ENCODE measurements at regions of chr15 and their contacts with region 1.

Region 1: GRCh38 chr15:62847900-62848489 is 194.6 kb upstream of the TPM1 start:
- DNase-seq: peak; percentile 67 to 76 (median 70)
- ATAC-seq: peak; percentile 93
- H3K4me3 ChIP-seq: no peak overlapping the region
- H3K27ac ChIP-seq: no peak overlapping the region
- H3K4me1 ChIP-seq: no peaks in the 10 kb centered on the region
- H3K27me3 ChIP-seq: peaks cover 18 to 51% of the 10 kb centered on the region in 2 experiments; a peak in 4 of 5 replicates
- CTCF ChIP-seq: peak; percentile 67 to 86 (median 76)
- EP300 ChIP-seq: no peak
- POLR2A ChIP-seq: no peak
- RAD21 ChIP-seq: peak; percentile 55 to 74

Region 2: DNA sequence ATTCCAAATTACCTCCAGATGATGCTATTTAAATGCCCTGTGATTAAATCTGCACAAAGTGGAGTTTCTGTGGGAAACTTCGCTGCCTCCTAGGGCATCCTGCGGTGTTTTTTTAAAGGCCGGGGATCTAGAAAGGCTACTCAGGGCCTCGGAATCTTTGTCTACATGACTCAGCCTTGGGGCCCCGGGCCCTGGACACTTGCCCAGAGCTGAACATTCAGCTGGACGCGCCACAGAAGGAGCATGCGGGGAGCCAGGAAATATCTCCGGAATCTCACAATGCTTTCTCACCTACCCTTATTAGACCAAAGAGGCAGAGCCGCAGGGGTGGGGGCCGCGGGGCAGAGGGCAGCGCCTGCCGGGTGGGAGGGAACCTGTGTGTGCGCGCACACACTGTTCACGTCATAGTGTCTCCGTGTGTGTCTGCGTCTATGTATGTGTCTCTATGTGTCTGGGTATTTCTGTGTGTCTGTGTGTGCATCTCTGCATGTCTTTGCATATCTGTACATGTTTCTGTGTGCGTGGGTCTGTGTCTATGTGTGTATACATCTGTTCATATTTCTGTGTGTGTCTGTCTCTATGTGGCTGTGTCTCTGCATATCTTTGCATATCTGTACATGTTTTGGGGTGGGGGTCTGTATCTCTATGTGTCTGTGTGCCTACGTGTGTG is 49.1 kb after region 1 on chr15:
- CTCF ChIA-PET with region 1: no interaction called
- POLR2A ChIA-PET with region 1: no interaction called
- in situ Hi-C with region 1: no loop called
- intact Hi-C with region 1: no loop called
- DNase-seq: peak; percentile 26 to 67 (median 48)
- ATAC-seq: peak; percentile 94
- H3K4me3 ChIP-seq: no peak overlapping the region
- H3K27ac ChIP-seq: no peak overlapping the region
- H3K4me1 ChIP-seq: peaks cover 4 to 10% of the 10 kb centered on the region in 2 experiments; a peak in 4 of 5 replicates
- H3K27me3 ChIP-seq: peaks cover 17 to 28% of the 10 kb centered on the region in 2 experiments
- CTCF ChIP-seq: no peak
- EP300 ChIP-seq: no peak
- POLR2A ChIP-seq: no peak
- RAD21 ChIP-seq: no peak

Region 3: GRCh38 chr15:63093486-63094205 is 245.7 kb after region 1 on chr15:
- CTCF ChIA-PET with region 1: interaction called, 15 read pairs
- POLR2A ChIA-PET with region 1: no interaction called
- in situ Hi-C with region 1: no loop called
- intact Hi-C with region 1: loop called (anchors 1 kb)
- DNase-seq: peak; percentile 74 to 87 (median 78)
- ATAC-seq: peak; percentile 99
- H3K4me3 ChIP-seq: no peak overlapping the region
- H3K27ac ChIP-seq: no peak overlapping the region
- H3K4me1 ChIP-seq: peaks cover 2 to 5% of the 10 kb centered on the region in 2 experiments; a peak in 1 of 5 replicates
- H3K27me3 ChIP-seq: 0 out of 5 replicates have a peak, but pooled peaks cover 0 to 3% of the 10 kb centered on the region in 2 experiments
- CTCF ChIP-seq: peak; percentile 92 to 95 (median 92)
- EP300 ChIP-seq: no peak
- POLR2A ChIP-seq: no peak
- RAD21 ChIP-seq: peak; percentile 98 to 100

Region 4: DNA sequence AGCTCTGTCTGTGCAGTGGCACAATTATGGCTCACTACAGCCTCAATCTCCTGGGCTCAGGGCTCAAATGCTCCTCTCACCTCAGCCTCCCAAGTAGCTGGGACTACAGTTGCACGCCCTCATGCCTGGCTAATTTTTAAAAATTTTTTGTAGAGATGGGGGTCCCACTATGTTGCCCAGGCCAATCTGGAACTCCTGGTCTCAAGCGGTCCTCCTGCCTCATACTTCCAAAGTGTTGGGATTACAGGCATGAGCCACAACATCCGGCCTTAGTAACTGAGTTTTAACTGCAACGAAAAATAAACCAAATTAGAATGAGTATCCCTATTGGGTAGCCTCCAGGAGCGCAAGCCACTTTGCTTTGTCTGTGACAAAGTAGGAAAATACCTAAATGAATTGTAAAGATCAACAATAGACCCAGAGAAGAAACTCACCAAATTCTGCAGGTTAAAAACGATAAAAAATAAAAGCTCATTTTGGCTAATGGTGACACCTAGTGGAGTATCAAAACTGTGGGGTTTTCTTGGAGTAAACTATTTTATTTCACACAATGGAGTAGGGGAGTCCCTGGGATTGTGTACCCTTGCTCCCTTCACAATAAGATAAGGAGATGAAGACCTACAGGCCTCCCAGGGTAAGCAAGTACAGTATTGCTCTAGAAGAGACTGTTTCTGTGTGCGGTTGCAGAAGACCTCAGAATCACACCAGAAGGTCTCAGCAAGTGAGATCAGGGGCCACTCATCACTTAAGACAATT is 554.7 kb after region 1 on chr15:
- CTCF ChIA-PET with region 1: no interaction called
- POLR2A ChIA-PET with region 1: no interaction called
- in situ Hi-C with region 1: loop called (anchors 25 kb)
- intact Hi-C with region 1: no loop called
- DNase-seq: peak in 3 of 4 experiments; percentile 20 to 57 (median 54)
- ATAC-seq: peak; percentile 79
- H3K4me3 ChIP-seq: no peak overlapping the region
- H3K27ac ChIP-seq: no peak overlapping the region
- H3K4me1 ChIP-seq: peaks cover 0 to 12% of the 10 kb centered on the region in 2 experiments; a peak in 3 of 5 replicates
- H3K27me3 ChIP-seq: no peaks in the 10 kb centered on the region
- CTCF ChIP-seq: peak; percentile 53 to 85 (median 58); a peak in 3 of 6 replicates
- EP300 ChIP-seq: no peak
- POLR2A ChIP-seq: no peak
- RAD21 ChIP-seq: peak; percentile 96 to 97

Region 5: DNA sequence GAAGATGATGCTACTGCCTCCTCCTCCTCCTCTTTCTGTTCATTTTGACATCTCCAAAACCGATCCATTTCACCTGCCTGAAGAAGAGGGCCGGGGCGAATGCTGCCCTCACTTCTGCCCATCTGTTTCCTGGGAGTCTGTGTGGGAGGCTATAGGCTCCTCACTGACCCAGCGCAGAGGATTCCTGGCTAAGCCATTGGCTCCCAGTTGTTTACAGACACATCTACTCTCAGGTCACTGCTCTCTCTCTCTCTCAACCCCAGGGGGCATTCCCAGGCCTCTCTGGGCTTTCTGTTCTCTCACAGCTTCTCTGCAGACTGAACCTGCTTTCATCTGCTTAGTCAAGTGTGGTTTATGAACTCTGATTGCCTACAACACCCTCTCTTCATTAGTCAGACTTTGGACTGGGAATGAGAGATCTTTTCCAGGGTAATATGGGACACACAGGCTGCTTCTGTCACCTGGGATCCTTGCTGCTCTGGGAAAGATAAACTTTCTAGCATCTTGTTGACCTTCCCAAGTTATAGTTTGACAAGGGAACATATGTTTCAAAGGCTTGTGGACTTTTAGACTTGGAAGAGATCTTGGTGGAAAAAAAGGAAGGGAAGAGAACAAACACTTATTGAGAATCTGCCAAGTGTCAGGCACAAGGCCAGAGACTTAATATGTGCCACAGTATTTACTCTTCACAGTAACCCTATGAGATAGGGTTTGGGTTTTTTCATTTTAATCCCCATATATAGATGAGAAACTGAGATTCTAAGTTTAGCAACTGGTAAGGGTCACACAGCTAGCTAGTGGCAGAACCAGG is 626.2 kb after region 1 on chr15:
- CTCF ChIA-PET with region 1: no interaction called
- POLR2A ChIA-PET with region 1: no interaction called
- in situ Hi-C with region 1: no loop called
- intact Hi-C with region 1: no loop called
- DNase-seq: no peak
- ATAC-seq: peak; percentile 68
- H3K4me3 ChIP-seq: no peak overlapping the region
- H3K27ac ChIP-seq: no peak overlapping the region
- H3K4me1 ChIP-seq: peaks cover 0 to 8% of the 10 kb centered on the region in 2 experiments; a peak in 3 of 5 replicates
- H3K27me3 ChIP-seq: no peaks in the 10 kb centered on the region
- CTCF ChIP-seq: peak in 1 of 3 experiments; percentile 26; a peak in 1 of 6 replicates
- EP300 ChIP-seq: no peak
- POLR2A ChIP-seq: no peak
- RAD21 ChIP-seq: peak in 1 of 2 experiments; percentile 28; a peak in 1 of 4 replicates

Measured in K562 (cell line).